ENCODE measurements at regions of chr9 and their contacts with region 1.

Region 1: DNA sequence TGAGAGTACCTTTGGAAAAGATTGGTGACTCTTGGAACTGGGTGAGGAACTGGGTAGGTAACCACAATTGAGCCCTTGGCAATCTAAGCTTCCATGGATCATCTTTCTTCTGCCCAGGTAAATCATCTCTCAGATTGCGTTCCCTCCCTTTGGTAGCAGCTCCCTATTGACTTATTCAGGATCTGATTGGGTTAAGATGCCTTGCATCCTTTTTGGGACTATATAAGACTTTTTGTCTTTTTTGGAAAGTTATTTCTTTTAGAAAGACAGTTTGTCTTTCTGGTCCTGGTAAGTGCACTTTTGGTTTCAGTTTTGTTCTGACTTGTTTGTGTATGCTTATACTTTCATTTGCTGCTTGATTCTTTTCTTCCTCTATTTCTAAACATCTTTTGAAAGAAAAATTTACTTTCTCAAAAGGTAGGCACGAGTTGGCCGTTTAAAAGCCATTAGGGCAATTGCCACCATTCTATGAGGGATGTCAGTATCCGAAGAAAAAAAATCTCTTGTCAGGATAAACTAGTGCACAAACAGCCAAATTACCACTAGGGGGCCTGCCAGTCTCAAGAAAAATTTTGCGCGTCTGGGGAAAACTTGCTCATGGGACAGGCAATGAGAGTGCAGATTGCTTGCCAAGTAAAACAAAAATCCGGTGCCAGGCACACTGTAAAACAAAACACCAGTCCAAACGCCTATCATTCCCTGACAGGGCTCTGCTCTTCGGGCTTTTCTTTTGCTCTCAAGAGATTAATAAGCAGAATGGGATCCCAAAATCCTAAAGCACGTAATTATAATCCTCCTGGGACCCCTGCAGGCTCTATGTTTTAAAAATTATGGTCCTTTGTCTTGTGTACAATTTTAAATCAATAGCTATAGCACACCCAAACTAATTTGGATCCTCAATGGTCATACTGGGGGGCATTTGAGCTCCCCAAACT is 12.8 kb downstream of the OR1J1 start:
- DNase-seq: peak; percentile 80
- ATAC-seq: peak; percentile 84
- H3K4me3 Mint-ChIP-seq: peak overlapping the region; percentile 82
- H3K27ac Mint-ChIP-seq: peak overlapping the region; percentile 83
- H3K4me1 Mint-ChIP-seq: peaks cover 15% of the 10 kb centered on the region
- H3K27me3 Mint-ChIP-seq: peaks cover 41% of the 10 kb centered on the region

Region 2: GRCh38 chr9:122453677-122454135 is 11.2 kb before region 1 on chr9:
- CTCF ChIA-PET with region 1: interaction called, 13 read pairs
- POLR2A ChIA-PET with region 1: no interaction called
- DNase-seq: no peak
- ATAC-seq: no peak
- H3K4me3 Mint-ChIP-seq: no peak overlapping the region
- H3K27ac Mint-ChIP-seq: no peak overlapping the region
- H3K4me1 Mint-ChIP-seq: no peaks in the 10 kb centered on the region
- H3K27me3 Mint-ChIP-seq: peaks cover 24% of the 10 kb centered on the region

Region 3: DNA sequence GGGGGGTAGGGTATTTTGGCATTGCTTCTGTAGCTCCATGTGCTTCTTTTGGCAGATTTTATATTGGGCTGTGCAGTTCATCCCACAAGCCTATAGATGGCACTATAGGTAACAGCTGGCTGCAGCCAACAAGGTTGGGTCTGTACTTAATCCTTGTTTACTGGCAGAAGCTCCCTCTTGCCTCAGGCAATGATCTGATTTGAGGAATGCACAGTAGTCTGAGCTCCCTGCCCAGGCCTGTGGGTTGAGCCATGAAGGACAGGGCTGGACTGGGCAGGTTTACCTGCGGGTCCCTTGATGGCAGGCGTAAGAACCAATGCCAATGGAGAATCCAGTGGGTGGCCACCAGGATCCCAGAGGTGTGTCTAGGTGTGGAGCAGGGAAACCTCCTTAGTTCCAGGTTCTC is 34.0 kb after region 1 on chr9:
- CTCF ChIA-PET with region 1: interaction called, 10 read pairs
- POLR2A ChIA-PET with region 1: no interaction called
- DNase-seq: peak; percentile 47
- ATAC-seq: peak; percentile 51
- H3K4me3 Mint-ChIP-seq: no peak overlapping the region
- H3K27ac Mint-ChIP-seq: no peak overlapping the region
- H3K4me1 Mint-ChIP-seq: no peaks in the 10 kb centered on the region
- H3K27me3 Mint-ChIP-seq: peaks cover 30% of the 10 kb centered on the region

Region 4: DNA sequence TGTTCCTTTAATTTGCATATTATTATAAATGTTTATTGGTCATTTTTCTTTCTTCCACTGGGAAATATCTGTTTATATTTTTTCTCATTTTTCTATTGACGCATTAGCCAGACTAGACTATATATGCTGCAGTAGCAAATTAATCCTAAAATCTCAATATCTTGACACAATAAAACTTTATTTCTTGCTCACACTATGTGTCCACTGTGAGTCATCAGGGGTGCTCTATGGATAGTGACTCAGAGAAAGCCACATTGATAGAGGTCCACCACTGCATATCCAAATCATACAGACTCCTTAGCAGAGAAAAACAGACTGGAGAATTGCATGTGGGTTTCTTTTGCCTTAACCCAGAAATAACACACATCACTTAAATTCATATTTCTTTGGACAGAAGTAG is 230.8 kb after region 1 on chr9:
- CTCF ChIA-PET with region 1: no interaction called
- POLR2A ChIA-PET with region 1: no interaction called
- DNase-seq: no peak
- ATAC-seq: no peak
- H3K4me3 Mint-ChIP-seq: no peak overlapping the region
- H3K27ac Mint-ChIP-seq: no peak overlapping the region
- H3K4me1 Mint-ChIP-seq: no peaks in the 10 kb centered on the region
- H3K27me3 Mint-ChIP-seq: peaks cover 9% of the 10 kb centered on the region

Region 5: GRCh38 chr9:122810306-122810946 is 345.5 kb after region 1 on chr9:
- CTCF ChIA-PET with region 1: interaction called, 102 read pairs
- POLR2A ChIA-PET with region 1: interaction called, 3 read pairs
- DNase-seq: peak; percentile 85
- ATAC-seq: peak; percentile 73
- H3K4me3 Mint-ChIP-seq: no peak overlapping the region
- H3K27ac Mint-ChIP-seq: no peak overlapping the region
- H3K4me1 Mint-ChIP-seq: peaks cover 34% of the 10 kb centered on the region
- H3K27me3 Mint-ChIP-seq: no peaks in the 10 kb centered on the region

Region 6: GRCh38 chr9:122816163-122816867 is 351.4 kb after region 1 on chr9:
- CTCF ChIA-PET with region 1: interaction called, 102 read pairs
- POLR2A ChIA-PET with region 1: interaction called, 3 read pairs
- DNase-seq: peak; percentile 69
- ATAC-seq: peak; percentile 95
- H3K4me3 Mint-ChIP-seq: peak overlapping the region; percentile 59
- H3K27ac Mint-ChIP-seq: peak overlapping the region; percentile 91
- H3K4me1 Mint-ChIP-seq: peaks cover 33% of the 10 kb centered on the region
- H3K27me3 Mint-ChIP-seq: no peaks in the 10 kb centered on the region

Measured in activated CD8-positive, alpha-beta T cell treated with anti-CD3 and anti-CD28 coated beads, Interleukin-2, amount 10 ng/mL, durations not matched to agents 7 days and 5 days (primary cell).